AG04449 (cell line): ENCODE measurements at regions of chr9 and their contacts with region 1.

Region 1: DNA sequence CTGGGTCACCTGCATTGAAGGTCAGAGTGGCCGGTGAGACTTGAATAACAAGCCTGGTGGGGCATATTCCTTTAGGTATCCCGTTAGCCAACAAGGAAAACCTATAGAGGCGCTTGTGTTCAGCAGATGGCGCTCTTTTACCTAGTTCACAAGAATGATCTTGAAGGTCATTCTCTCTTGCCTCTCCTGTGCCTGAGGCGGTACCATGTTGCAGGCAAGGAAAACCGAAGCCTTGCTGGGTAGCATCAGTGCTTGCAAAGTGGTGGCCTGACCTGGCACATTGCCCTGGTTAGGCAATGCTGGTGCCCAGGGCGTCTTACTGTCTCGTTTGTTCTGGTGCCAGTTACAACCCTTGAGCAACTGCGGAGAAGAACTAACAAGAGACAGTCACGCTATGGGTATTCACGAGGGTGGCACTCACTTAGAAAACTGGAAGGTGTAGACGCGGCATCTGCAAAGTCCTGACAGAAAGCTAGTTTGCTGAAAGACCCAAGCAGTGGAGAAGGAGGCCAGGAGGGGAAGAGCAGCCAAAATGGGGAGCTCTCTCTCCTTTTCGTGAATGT is 56.7 kb downstream of the AOPEP start:
- DNase-seq: peak; percentile 71
- H3K4me3 ChIP-seq: no peak overlapping the region; the same call in 1 of the 2 replicates
- CTCF ChIP-seq: peak; percentile 57

Region 2: GRCh38 chr9:94726495-94727191 is 56.5 kb before region 1 on chr9 and contains the start of gene AOPEP:
- CTCF ChIA-PET with region 1: no interaction called
- POLR2A ChIA-PET with region 1: no interaction called
- DNase-seq: peak; percentile 55
- H3K4me3 ChIP-seq: peak within 1 kb of the TSS; percentile 94
- CTCF ChIP-seq: no peak

Region 3: DNA sequence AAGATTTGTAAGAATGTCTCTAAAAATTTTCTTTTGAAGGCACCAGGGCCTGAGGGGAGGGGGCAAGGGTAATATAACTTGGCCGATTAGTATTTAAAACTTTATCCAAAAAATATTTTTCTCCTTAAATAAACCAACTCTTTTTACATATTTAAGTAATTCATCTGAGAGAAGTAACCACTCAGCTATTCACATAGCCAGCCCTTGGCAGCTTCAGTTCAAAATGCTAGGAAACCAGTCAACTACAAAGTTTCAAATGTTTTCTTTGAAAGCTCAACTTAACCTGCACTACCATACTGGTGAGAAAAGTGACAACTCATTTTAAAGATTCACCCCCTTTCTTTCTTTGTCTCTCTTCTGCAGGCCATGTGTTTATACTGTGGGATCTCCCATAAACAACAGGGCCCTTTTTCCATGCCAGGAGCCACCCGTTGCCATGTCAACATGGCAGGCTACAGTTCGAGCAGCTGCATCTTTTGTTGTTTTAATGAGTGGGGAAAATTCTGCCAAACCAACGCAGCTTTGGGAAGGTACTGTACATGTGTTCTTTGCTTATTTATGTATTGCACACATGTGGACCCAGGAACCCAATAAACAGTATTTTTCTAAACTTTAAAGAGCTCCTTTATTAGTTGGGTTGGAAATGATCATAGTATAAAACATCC is 10.4 kb before region 1 on chr9:
- CTCF ChIA-PET with region 1: interaction called, 10 read pairs
- POLR2A ChIA-PET with region 1: no interaction called
- DNase-seq: no peak
- H3K4me3 ChIP-seq: no peak overlapping the region
- CTCF ChIP-seq: no peak

Region 4: DNA sequence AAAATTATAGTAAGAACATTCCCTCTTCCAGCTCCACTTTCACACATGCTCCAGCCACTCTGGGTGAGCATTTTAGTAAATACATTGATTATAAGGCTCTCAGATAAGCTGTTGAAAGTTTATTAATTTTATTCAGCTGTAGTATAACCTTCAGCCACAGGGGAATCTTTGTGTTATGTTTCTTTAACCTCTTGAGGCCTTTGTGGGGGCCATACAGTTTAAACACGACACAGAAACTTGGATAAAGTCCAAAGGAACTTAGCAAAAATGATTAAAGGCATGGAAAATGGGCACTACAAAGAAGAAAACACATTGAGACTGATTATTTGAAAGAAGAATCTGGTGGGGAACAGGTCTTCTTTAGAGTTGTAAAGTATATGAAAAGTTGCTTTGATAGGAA is 13.5 kb after region 1 on chr9:
- CTCF ChIA-PET with region 1: interaction called, 22 read pairs
- POLR2A ChIA-PET with region 1: interaction called, 3 read pairs
- DNase-seq: no peak
- H3K4me3 ChIP-seq: no peak overlapping the region
- CTCF ChIP-seq: no peak

Region 5: DNA sequence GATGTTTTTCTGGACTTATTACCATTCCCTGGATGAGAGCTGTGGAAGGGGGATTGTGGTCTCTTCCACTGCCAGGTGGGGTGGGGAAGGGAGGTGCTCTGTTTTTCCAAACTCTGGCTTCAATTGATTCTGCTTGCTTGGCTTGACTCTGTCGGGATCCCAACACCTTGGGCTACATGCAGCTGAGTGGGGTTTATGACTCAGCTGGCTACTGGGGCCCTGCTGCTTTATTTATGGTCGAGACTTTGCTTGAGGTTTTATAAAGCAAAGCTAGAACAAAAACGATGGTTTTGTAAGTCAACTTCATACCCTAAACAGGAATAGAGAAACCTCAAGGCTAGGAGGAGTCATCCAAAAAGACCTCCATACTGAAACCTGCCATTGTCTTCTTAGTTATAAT is 19.6 kb after region 1 on chr9:
- CTCF ChIA-PET with region 1: interaction called, 18 read pairs
- POLR2A ChIA-PET with region 1: interaction called, 3 read pairs
- DNase-seq: no peak
- H3K4me3 ChIP-seq: no peak overlapping the region
- CTCF ChIP-seq: no peak

Region 6: GRCh38 chr9:94922098-94922607 is 139.0 kb after region 1 on chr9:
- CTCF ChIA-PET with region 1: interaction called, 14 read pairs
- POLR2A ChIA-PET with region 1: interaction called, 5 read pairs
- DNase-seq: peak; percentile 99
- H3K4me3 ChIP-seq: no peak overlapping the region
- CTCF ChIP-seq: no peak

Region 7: GRCh38 chr9:94973451-94973941 is 190.3 kb after region 1 on chr9:
- CTCF ChIA-PET with region 1: interaction called, 10 read pairs
- POLR2A ChIA-PET with region 1: no interaction called
- DNase-seq: no peak
- H3K4me3 ChIP-seq: no peak overlapping the region
- CTCF ChIP-seq: no peak

Region 8: GRCh38 chr9:95008151-95008771 is 225.1 kb after region 1 on chr9:
- CTCF ChIA-PET with region 1: interaction called, 15 read pairs
- POLR2A ChIA-PET with region 1: no interaction called
- DNase-seq: no peak
- H3K4me3 ChIP-seq: peak overlapping the region; percentile 77
- CTCF ChIP-seq: no peak